ENCODE measurements at regions of chr14 and their contacts with region 1.

Region 1: DNA sequence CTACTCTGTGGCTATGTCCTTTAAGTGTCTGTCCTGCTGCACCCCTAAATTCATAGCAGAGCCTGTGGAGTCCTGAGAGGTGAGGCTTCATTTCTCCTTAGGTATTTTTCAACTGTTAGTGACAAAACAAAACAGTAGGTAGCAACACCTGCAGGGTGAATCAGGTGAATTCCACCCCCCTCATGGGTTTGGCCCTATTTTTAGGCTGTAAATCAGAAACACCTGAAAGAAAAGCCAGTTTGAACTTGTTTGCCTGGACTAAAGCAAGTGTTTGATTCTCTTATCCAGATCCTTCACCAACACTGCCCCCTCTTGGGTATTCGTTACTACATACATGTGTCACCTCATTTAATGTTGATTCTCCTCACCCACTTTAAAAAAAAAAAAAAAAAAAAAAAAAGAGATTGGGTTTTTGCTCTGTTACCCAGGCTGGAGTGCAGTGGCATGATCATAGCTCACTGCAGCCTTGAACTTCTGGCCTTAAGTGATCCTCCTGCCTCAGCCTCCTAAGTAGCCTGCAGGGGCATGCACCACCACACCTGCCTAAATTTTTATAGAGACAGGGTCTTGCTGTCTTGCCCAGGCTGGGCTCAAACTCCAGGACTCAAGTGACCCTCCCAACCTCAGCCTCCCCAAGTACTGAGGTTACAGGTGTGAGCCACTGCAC is 10.3 kb downstream of the TBPL2 start:
- DNase-seq: peak in 11 of 14 experiments; percentile 4 to 85 (median 48)
- ATAC-seq: peak; percentile 97
- H3K4me3 ChIP-seq: no peak overlapping the region
- H3K4me3 Mint-ChIP-seq: no peak overlapping the region
- H3K27ac ChIP-seq: peak overlapping the region in 1 of 2 donors; percentile 13
- H3K27ac Mint-ChIP-seq: peak overlapping the region; percentile 59
- H3K4me1 ChIP-seq: peaks cover 26% of the 10 kb centered on the region
- H3K4me1 Mint-ChIP-seq: peaks cover 42% of the 10 kb centered on the region
- H3K27me3 ChIP-seq: no peaks in the 10 kb centered on the region
- H3K27me3 Mint-ChIP-seq: no peaks in the 10 kb centered on the region
- CTCF ChIP-seq: peak; percentile 58

Region 2: DNA sequence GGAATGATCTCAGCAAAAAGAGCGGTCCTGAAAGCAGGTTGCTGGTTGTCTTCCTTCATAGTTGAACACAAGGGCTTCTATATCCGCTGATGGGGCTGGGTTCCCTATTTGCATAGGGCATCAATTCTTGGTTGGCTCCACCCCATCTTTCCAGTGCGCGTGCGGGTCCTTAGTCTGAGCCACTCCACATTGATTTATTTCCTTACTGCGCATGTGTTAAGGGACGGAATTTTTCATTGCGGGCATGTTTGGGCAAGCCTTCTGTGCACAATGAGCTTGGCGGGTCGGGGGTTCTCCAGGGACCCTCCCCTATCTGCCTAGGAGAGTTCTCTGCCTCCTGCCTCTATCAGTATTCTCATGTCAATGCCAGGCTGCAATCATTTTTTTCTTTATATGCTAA is 217.5 kb before region 1 on chr14:
- CTCF ChIA-PET with region 1: interaction called, 3 read pairs
- POLR2A ChIA-PET with region 1: no interaction called
- intact Hi-C with region 1: loop called (anchors 1 kb)
- DNase-seq: no peak
- ATAC-seq: no peak
- H3K4me3 ChIP-seq: no peak overlapping the region
- H3K4me3 Mint-ChIP-seq: no peak overlapping the region
- H3K27ac ChIP-seq: no peak overlapping the region
- H3K27ac Mint-ChIP-seq: no peak overlapping the region
- H3K4me1 ChIP-seq: no peaks in the 10 kb centered on the region
- H3K4me1 Mint-ChIP-seq: peaks cover 5% of the 10 kb centered on the region
- H3K27me3 ChIP-seq: no peaks in the 10 kb centered on the region
- H3K27me3 Mint-ChIP-seq: no peaks in the 10 kb centered on the region
- CTCF ChIP-seq: no peak

Region 3: DNA sequence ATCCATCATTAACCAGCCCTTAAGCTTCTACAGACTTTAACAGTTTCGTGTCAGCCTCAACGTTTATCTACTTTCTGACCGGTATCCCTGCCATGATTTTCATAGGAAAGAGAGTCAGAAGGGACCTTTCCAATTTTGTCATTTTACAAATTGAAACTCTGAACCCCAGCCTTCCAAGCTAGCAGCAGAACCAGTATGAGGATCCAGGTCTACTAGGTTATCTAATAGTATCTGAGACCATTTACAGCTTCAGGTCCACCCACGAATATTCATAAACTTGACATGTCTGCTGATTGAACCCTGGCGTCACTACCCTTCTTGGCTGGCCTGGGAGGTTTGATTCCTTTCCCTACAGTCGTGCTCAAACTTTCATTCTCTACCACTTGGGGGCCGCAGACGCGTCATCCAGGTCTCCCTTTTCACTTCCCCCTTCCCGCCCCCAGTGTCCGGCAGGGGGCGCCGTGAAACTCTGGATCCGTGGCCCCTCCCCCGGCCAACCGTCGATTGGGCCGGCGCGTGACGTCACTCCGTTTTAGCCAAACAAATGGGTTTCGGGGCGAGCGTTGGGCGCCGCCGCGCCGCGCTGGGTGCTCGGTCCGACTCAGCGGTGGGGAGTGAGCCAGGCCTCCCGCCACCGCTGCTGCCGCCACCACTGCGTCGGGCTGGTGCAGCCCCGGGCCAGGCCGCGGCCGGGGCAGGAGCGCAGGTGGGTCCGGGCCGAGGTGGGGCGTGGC is 159.2 kb before region 1 on chr14 and contains the start of gene FBXO34:
- CTCF ChIA-PET with region 1: interaction called, 5 read pairs
- POLR2A ChIA-PET with region 1: no interaction called
- intact Hi-C with region 1: loop called (anchors 2 to 5 kb)
- DNase-seq: peak; percentile 96 to 100 (median 100)
- ATAC-seq: peak; percentile 91
- H3K4me3 ChIP-seq: peak within 1 kb of the TSS; percentile 98
- H3K4me3 Mint-ChIP-seq: peak within 1 kb of the TSS; percentile 97
- H3K27ac ChIP-seq: peak within 1 kb of the TSS; percentile 55 to 61
- H3K27ac Mint-ChIP-seq: peak within 1 kb of the TSS; percentile 94
- H3K4me1 ChIP-seq: peaks cover 9% of the 10 kb centered on the region
- H3K4me1 Mint-ChIP-seq: peaks cover 47% of the 10 kb centered on the region
- H3K27me3 ChIP-seq: no peaks in the 10 kb centered on the region
- H3K27me3 Mint-ChIP-seq: no peaks in the 10 kb centered on the region
- CTCF ChIP-seq: peak; percentile 97
- total RNA-seq, gene FBXO34: 28.3 to 29.7 TPM

Region 4: GRCh38 chr14:55373784-55374705 is 56.1 kb before region 1 on chr14:
- CTCF ChIA-PET with region 1: no interaction called
- POLR2A ChIA-PET with region 1: no interaction called
- intact Hi-C with region 1: no loop called
- DNase-seq: peak in 5 of 14 experiments; percentile 20 to 87 (median 75)
- ATAC-seq: peak; percentile 90
- H3K4me3 ChIP-seq: no peak overlapping the region
- H3K4me3 Mint-ChIP-seq: peak overlapping the region; percentile 32
- H3K27ac ChIP-seq: peak overlapping the region; percentile 55 to 68
- H3K27ac Mint-ChIP-seq: peak overlapping the region; percentile 80
- H3K4me1 ChIP-seq: peaks cover 27% of the 10 kb centered on the region
- H3K4me1 Mint-ChIP-seq: peaks cover 33% of the 10 kb centered on the region
- H3K27me3 ChIP-seq: no peaks in the 10 kb centered on the region
- H3K27me3 Mint-ChIP-seq: no peaks in the 10 kb centered on the region
- CTCF ChIP-seq: no peak

Region 5: GRCh38 chr14:55411426-55412389 is 18.4 kb before region 1 on chr14 and contains the start of gene ATG14:
- CTCF ChIA-PET with region 1: interaction called, 5 read pairs
- POLR2A ChIA-PET with region 1: interaction called, 4 read pairs
- intact Hi-C with region 1: loop called in 1 of 2 experiments (anchors 2 kb)
- DNase-seq: peak; percentile 51 to 85 (median 66)
- ATAC-seq: peak; percentile 98
- H3K4me3 ChIP-seq: peak within 1 kb of the TSS; percentile 92
- H3K4me3 Mint-ChIP-seq: peak within 1 kb of the TSS; percentile 85
- H3K27ac ChIP-seq: peak within 1 kb of the TSS; percentile 49 to 61
- H3K27ac Mint-ChIP-seq: peak within 1 kb of the TSS; percentile 69
- H3K4me1 ChIP-seq: peaks cover 9% of the 10 kb centered on the region
- H3K4me1 Mint-ChIP-seq: peaks cover 50% of the 10 kb centered on the region
- H3K27me3 ChIP-seq: no peaks in the 10 kb centered on the region
- H3K27me3 Mint-ChIP-seq: no peaks in the 10 kb centered on the region
- CTCF ChIP-seq: no peak
- total RNA-seq, gene ATG14: 19.9 to 20.5 TPM